Activated B cell treated with CpG ODN at 0.5 μM for 24 hours (primary cell): ENCODE measurements at regions of chr22 and their contacts with region 1.

Region 1: GRCh38 chr22:37608477-37609239 is at the start of gene GGA1:
- DNase-seq: peak; percentile 82
- ATAC-seq: peak; percentile 74
- H3K4me3 Mint-ChIP-seq: peak within 1 kb of the TSS; percentile 90
- H3K27ac Mint-ChIP-seq: peak within 1 kb of the TSS; percentile 94
- H3K4me1 Mint-ChIP-seq: peaks cover 41% of the 10 kb centered on the region
- H3K27me3 Mint-ChIP-seq: peaks cover 15% of the 10 kb centered on the region
- CTCF ChIP-seq: no peak
- total RNA-seq, gene GGA1: 102 and 126 TPM in 2 replicates

Region 2: DNA sequence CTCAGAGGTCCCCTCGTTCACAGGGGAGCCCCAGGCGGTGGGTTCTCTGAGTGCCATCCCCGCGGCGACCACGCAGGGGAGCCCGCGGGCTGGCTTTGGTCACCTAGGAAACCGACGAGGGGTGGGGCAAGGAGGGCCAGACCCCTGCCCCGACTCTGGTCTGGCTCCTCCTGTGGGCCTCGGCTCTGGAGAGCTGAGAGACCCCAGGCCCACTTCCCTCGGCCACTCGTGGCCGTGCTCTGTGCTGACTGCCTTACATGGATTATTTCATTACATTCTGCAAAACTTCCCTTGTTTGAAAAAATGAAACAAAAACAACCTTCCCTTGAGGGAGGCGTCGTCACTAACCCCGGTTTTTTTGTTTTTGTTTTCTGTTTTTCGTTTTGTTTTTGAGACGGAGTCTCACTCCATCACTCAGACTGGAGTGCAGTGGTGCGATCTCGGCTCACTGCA is 341.5 kb before region 1 on chr22:
- CTCF ChIA-PET with region 1: no interaction called
- POLR2A ChIA-PET with region 1: no interaction called
- intact Hi-C with region 1: no loop called
- DNase-seq: peak; percentile 80
- ATAC-seq: peak; percentile 99
- H3K4me3 Mint-ChIP-seq: peak overlapping the region; percentile 88
- H3K27ac Mint-ChIP-seq: peak overlapping the region; percentile 93
- H3K4me1 Mint-ChIP-seq: peaks cover 31% of the 10 kb centered on the region
- H3K27me3 Mint-ChIP-seq: no peaks in the 10 kb centered on the region
- CTCF ChIP-seq: peak; percentile 29

Region 3: DNA sequence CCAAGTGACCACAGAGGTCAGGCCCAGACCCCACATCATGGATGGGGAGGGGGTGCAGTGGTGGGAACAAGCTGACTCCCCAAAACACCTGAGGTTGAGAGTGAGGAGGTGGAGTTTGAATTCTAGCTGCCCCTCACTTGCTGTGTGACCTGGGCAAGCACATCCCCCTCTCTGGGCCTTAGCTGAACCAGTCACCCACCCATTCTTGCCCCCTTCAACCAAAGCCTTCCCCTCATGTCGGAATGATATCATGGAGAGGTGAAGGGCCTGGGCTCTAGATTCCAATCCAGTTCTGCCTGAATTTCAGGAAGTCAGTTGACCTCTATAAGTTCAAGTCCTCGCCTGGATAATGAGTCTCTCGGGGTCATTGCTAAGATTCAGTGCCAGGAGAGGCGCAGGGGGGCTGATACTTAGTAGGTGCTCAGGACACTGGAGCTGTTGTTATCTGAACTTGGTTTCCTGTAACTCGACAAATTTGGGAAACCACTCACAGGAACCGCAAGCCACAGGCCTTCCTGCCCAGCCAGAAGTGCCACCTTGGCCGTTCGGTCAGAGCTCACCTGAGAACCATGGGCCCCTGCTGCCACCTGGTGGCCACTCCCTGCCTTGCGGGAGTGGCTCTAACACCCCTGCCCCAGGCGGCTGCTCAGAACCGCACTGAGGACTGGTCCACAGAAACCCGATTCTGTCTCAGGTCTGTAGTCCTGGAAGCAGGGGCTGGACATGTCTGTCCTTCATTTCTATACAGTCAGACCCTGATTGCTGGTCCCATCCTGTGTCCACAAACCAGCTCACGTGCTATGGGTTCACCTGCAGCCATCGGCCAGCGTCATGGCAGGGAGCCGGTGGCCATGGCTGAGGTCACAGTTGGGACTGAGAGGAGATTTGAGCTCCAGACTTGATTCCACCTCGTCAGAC is 41.5 kb before region 1 on chr22:
- CTCF ChIA-PET with region 1: interaction called, 13 read pairs
- POLR2A ChIA-PET with region 1: interaction called, 7 read pairs
- intact Hi-C with region 1: no loop called
- DNase-seq: peak; percentile 84
- ATAC-seq: peak; percentile 94
- H3K4me3 Mint-ChIP-seq: peak overlapping the region; percentile 32
- H3K27ac Mint-ChIP-seq: peak overlapping the region; percentile 53
- H3K4me1 Mint-ChIP-seq: peaks cover 21% of the 10 kb centered on the region
- H3K27me3 Mint-ChIP-seq: peaks cover 21% of the 10 kb centered on the region
- CTCF ChIP-seq: peak; percentile 90

Region 4: GRCh38 chr22:37643225-37643847 is 34.7 kb after region 1 on chr22:
- CTCF ChIA-PET with region 1: interaction called, 50 read pairs
- POLR2A ChIA-PET with region 1: interaction called, 22 read pairs
- intact Hi-C with region 1: no loop called
- DNase-seq: peak; percentile 85
- ATAC-seq: peak; percentile 80
- H3K4me3 Mint-ChIP-seq: peak overlapping the region; percentile 28
- H3K27ac Mint-ChIP-seq: peak overlapping the region; percentile 59
- H3K4me1 Mint-ChIP-seq: peaks cover 34% of the 10 kb centered on the region
- H3K27me3 Mint-ChIP-seq: no peaks in the 10 kb centered on the region
- CTCF ChIP-seq: peak; percentile 64

Region 5: GRCh38 chr22:37745548-37746365 is 137.1 kb after region 1 on chr22:
- CTCF ChIA-PET with region 1: no interaction called
- POLR2A ChIA-PET with region 1: interaction called, 4 read pairs
- intact Hi-C with region 1: loop called (anchors 1 kb)
- DNase-seq: peak; percentile 77
- ATAC-seq: peak; percentile 95
- H3K4me3 Mint-ChIP-seq: peak overlapping the region; percentile 90
- H3K27ac Mint-ChIP-seq: peak overlapping the region; percentile 89
- H3K4me1 Mint-ChIP-seq: peaks cover 22% of the 10 kb centered on the region
- H3K27me3 Mint-ChIP-seq: no peaks in the 10 kb centered on the region
- CTCF ChIP-seq: no peak

Region 6: GRCh38 chr22:37849089-37849751 is 240.6 kb after region 1 on chr22 and contains the start of gene EIF3L:
- CTCF ChIA-PET with region 1: interaction called, 3 read pairs
- POLR2A ChIA-PET with region 1: interaction called, 17 read pairs
- intact Hi-C with region 1: loop called (anchors 1 kb)
- DNase-seq: peak; percentile 86
- ATAC-seq: peak; percentile 76
- H3K4me3 Mint-ChIP-seq: peak within 1 kb of the TSS; percentile 92
- H3K27ac Mint-ChIP-seq: peak within 1 kb of the TSS; percentile 99
- H3K4me1 Mint-ChIP-seq: peaks cover 39% of the 10 kb centered on the region
- H3K27me3 Mint-ChIP-seq: no peaks in the 10 kb centered on the region
- CTCF ChIP-seq: no peak
- total RNA-seq, gene EIF3L: 712 and 718 TPM in 2 replicates

Region 7: DNA sequence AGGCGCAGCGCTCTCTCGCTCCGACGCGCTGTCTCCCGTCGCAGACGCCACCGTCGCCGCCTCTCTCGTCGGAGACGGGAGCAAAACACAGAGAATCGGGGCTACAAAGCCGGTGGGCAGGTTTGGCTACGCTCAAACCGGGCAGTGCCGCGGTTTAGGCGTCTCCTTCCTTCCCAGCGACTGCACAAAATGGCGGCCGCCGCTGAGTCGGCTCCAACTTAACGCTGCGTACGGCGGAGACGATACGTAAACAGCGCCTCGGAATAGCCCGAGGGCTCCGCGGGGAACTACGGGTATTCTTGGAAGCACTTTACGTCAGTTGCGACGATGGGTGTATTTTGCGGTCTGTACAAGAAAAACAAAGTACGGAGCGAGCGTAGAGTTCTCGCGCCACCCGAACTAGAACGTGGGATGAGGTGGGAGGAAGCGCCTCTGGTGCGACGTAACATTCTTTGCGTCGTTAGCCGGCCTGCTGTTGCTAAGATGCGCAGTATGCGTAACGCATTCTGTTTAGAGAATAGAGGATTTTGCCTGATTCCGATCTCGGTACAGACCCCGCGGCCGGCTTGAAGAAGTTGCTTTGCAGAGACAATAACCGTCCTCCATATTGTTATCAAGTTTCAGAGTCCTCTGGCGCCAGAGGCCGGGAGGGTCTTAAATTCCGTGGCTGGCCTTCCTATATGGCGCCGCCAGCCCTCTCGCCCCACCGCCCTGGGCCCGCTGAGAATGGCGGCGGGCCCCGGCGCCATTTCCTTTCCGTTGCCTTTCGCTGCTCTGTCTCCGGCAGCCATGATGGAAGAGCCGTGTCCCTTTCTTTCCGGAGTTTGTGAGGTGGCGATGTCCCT is 897.7 kb after region 1 on chr22 and contains the start of gene DDX17:
- CTCF ChIA-PET with region 1: no interaction called
- POLR2A ChIA-PET with region 1: no interaction called
- intact Hi-C with region 1: loop called (anchors 2 kb)
- DNase-seq: peak; percentile 91
- ATAC-seq: peak; percentile 89
- H3K4me3 Mint-ChIP-seq: peak within 1 kb of the TSS; percentile 99
- H3K27ac Mint-ChIP-seq: peak within 1 kb of the TSS; percentile 100
- H3K4me1 Mint-ChIP-seq: peaks cover 41% of the 10 kb centered on the region
- H3K27me3 Mint-ChIP-seq: no peaks in the 10 kb centered on the region
- CTCF ChIP-seq: no peak
- total RNA-seq, gene DDX17: 533 and 612 TPM in 2 replicates